AG04450 (cell line): ENCODE measurements at regions of chr1 and their contacts with region 1.

Region 1: GRCh38 chr1:11178021-11179015 is 10.8 kb upstream of the ANGPTL7 start:
- DNase-seq: no peak
- H3K4me3 ChIP-seq: no peak overlapping the region
- H3K27ac ChIP-seq: no peak overlapping the region
- H3K27me3 ChIP-seq: no peaks in the 10 kb centered on the region
- CTCF ChIP-seq: no peak

Region 2: DNA sequence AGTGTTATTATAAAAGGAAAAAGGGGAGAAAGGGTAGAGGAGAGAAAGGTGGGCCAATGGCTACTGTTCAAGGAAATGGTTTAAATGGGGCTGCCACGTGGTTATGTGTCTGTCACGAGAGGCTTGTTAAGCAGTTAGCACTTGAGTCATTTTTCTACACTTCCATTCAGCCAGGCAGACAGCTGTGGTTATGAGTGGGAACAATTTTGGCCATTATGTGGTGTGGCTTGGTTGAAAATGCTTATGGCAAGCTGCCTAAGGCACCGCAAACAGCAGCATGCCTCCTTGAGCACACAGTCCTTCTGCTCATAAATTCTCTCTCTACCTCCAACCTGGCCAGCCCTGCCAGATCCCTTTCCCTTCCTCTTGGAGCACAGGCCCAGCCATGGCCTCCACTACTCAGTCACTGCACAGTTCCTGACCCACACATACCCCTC is 115.3 kb before region 1 on chr1:
- CTCF ChIA-PET with region 1: no interaction called
- POLR2A ChIA-PET with region 1: no interaction called
- DNase-seq: no peak
- H3K4me3 ChIP-seq: no peak overlapping the region
- H3K27ac ChIP-seq: no peak overlapping the region
- H3K27me3 ChIP-seq: no peaks in the 10 kb centered on the region
- CTCF ChIP-seq: no peak

Region 3: GRCh38 chr1:11158720-11159321 is 19.5 kb before region 1 on chr1:
- CTCF ChIA-PET with region 1: interaction called, 3 read pairs
- POLR2A ChIA-PET with region 1: interaction called, 13 read pairs
- DNase-seq: peak; percentile 82
- H3K4me3 ChIP-seq: no peak overlapping the region
- H3K27ac ChIP-seq: peak overlapping the region; percentile 96
- H3K27me3 ChIP-seq: no peaks in the 10 kb centered on the region
- CTCF ChIP-seq: no peak

Region 4: DNA sequence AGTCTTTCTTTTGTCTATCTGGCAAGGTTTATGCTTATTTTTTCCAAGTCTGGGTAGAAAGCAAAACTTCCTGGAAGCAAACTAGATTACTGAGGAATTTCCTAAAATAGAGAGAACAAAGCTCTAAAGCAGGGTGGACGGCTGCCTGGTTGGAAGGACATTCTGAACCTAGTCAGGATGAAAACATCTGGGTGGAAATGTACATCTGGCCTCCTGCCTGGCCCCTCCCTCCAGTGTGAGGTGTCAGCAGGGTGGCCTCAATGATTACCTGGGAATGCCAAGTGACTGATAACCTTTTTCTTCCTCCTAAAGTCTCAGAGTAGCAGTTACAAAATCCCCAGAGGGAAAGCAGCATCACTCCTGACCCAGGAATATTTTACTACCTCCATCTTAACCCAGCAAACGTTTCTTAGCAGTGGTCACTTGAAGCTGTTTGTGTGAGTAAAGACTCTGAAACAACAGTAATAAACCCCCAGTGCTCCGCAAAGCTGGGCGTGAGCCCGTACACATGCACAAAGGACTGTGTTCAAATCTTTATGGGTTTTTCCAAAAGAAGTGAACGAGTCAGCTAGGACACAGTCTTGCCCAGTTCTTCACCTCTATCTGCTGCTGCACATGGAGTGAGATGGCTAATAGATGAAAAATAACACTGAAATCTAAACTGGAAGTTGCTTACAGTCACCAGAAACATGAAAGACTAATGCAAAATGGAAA is 29.7 kb after region 1 on chr1:
- CTCF ChIA-PET with region 1: no interaction called
- POLR2A ChIA-PET with region 1: no interaction called
- DNase-seq: no peak
- H3K4me3 ChIP-seq: no peak overlapping the region
- H3K27ac ChIP-seq: no peak overlapping the region
- H3K27me3 ChIP-seq: no peaks in the 10 kb centered on the region
- CTCF ChIP-seq: no peak